ENCODE measurements at regions of chr13 and their contacts with region 1.

Region 1: GRCh38 chr13:30132623-30133553 is 174.5 kb downstream of the KATNAL1 start:
- DNase-seq: peak; percentile 89
- H3K4me3 ChIP-seq: no peak overlapping the region
- H3K27ac ChIP-seq: no peak overlapping the region
- H3K4me1 ChIP-seq: peaks cover 4% of the 10 kb centered on the region
- H3K27me3 ChIP-seq: no peaks in the 10 kb centered on the region
- CTCF ChIP-seq: peak; percentile 79 to 92
- POLR2A ChIP-seq: no peak

Region 2: GRCh38 chr13:30047154-30047874 is 85.6 kb before region 1 on chr13:
- CTCF ChIA-PET with region 1: no interaction called
- POLR2A ChIA-PET with region 1: no interaction called
- dilution Hi-C with region 1: no loop called
- intact Hi-C with region 1: no loop called
- DNase-seq: no peak
- H3K4me3 ChIP-seq: no peak overlapping the region
- H3K27ac ChIP-seq: no peak overlapping the region
- H3K4me1 ChIP-seq: no peaks in the 10 kb centered on the region
- H3K27me3 ChIP-seq: no peaks in the 10 kb centered on the region
- CTCF ChIP-seq: no peak
- POLR2A ChIP-seq: no peak

Region 3: GRCh38 chr13:30158774-30159445 is 26.0 kb after region 1 on chr13:
- CTCF ChIA-PET with region 1: interaction called, 60 read pairs
- POLR2A ChIA-PET with region 1: no interaction called
- dilution Hi-C with region 1: no loop called
- intact Hi-C with region 1: loop called (anchors 1 kb)
- DNase-seq: no peak
- H3K4me3 ChIP-seq: no peak overlapping the region
- H3K27ac ChIP-seq: no peak overlapping the region
- H3K4me1 ChIP-seq: no peaks in the 10 kb centered on the region
- H3K27me3 ChIP-seq: peaks cover 4 to 8% of the 10 kb centered on the region in 2 experiments
- CTCF ChIP-seq: peak in 1 of 2 donors; percentile 21
- POLR2A ChIP-seq: no peak

Region 4: DNA sequence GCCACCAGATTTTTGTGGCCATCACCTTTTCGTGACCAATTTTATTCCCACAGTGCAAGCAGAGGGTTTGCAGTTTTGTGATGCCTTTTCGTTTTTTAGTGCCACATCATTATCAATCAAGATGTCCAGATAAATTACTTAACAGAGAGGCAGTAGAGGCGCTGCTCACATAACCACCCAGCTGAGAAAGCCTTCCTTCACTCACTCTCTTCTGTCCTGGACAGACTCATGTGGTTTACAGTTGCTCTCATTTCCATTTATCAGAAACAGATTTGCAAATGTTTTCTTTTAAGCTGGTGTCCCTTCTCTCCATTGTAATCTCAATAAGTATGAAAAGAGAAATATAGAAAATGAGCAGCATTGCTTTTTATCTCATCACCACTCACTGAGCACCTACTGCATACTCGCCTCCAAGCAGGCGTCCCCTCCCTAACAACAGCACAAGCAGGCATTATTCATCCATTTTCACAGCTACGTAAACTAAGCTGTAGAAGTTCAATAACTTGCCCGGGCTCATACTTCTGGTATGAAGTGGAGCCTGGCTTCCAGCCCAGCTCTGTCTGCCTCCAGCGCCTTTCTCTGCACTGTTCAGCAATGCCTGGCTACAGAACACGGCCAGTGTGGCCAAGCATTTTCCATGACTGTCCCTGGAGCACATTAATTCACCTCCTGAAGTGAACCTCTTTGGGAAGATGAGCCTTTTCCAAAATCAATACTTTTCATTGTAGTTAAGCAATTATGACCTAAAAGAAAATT is 209.1 kb after region 1 on chr13:
- CTCF ChIA-PET with region 1: interaction called, 24 read pairs
- POLR2A ChIA-PET with region 1: no interaction called
- dilution Hi-C with region 1: loop called (anchors 25 kb)
- intact Hi-C with region 1: no loop called
- DNase-seq: peak; percentile 71
- H3K4me3 ChIP-seq: no peak overlapping the region
- H3K27ac ChIP-seq: no peak overlapping the region
- H3K4me1 ChIP-seq: no peaks in the 10 kb centered on the region
- H3K27me3 ChIP-seq: no peaks in the 10 kb centered on the region
- CTCF ChIP-seq: no peak
- POLR2A ChIP-seq: no peak

Region 5: DNA sequence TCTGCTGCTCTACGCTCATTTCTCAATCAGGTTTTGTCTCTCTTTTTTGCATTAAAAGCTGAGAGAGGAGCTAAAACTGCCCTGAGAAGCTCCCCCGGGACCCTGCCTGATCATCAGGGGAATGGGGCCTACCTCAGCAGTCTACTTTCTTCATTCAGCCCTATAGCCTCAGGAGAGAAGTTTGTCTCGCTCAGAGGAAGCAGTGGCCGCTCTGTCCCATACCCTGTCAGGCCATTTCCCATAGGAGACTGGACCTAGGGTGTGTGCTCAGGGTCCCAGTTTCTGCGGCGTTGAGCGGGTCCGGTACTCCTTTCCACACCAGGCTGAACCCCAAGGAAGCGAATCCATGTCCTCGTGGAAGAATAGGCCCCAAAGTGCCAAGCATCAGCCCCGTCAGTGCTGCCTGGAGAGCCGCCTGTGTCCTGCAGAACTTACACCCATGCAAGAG is 311.1 kb after region 1 on chr13:
- CTCF ChIA-PET with region 1: interaction called, 10 read pairs
- POLR2A ChIA-PET with region 1: no interaction called
- dilution Hi-C with region 1: no loop called
- intact Hi-C with region 1: loop called (anchors 5 kb)
- DNase-seq: no peak
- H3K4me3 ChIP-seq: no peak overlapping the region
- H3K27ac ChIP-seq: no peak overlapping the region
- H3K4me1 ChIP-seq: peaks cover 9% of the 10 kb centered on the region
- H3K27me3 ChIP-seq: no peaks in the 10 kb centered on the region
- CTCF ChIP-seq: no peak
- POLR2A ChIP-seq: no peak

Region 6: DNA sequence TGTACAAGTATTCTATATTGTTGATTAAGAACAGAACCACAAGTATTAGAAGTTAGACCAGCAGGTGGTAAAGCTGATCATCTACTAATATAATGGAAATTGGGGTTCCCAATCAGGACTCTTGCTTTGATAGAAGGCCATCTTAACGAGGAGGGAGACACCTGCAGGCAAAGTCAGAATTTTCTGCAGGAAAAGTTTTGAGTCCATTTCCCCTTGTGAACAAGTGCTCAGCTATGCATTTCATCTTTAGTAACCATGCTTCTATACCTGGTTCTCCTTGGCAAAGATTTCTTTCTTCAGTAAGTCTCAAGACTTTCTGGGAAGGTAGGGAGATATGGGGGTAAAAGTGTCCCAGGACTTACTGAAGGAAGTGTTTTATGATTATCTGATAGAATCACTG is 448.7 kb after region 1 on chr13:
- CTCF ChIA-PET with region 1: interaction called, 38 read pairs
- POLR2A ChIA-PET with region 1: no interaction called
- dilution Hi-C with region 1: no loop called
- intact Hi-C with region 1: no loop called
- DNase-seq: peak; percentile 32
- H3K4me3 ChIP-seq: no peak overlapping the region
- H3K27ac ChIP-seq: no peak overlapping the region
- H3K4me1 ChIP-seq: no peaks in the 10 kb centered on the region
- H3K27me3 ChIP-seq: no peaks in the 10 kb centered on the region
- CTCF ChIP-seq: peak in 1 of 2 donors; percentile 23
- POLR2A ChIP-seq: no peak

Region 7: DNA sequence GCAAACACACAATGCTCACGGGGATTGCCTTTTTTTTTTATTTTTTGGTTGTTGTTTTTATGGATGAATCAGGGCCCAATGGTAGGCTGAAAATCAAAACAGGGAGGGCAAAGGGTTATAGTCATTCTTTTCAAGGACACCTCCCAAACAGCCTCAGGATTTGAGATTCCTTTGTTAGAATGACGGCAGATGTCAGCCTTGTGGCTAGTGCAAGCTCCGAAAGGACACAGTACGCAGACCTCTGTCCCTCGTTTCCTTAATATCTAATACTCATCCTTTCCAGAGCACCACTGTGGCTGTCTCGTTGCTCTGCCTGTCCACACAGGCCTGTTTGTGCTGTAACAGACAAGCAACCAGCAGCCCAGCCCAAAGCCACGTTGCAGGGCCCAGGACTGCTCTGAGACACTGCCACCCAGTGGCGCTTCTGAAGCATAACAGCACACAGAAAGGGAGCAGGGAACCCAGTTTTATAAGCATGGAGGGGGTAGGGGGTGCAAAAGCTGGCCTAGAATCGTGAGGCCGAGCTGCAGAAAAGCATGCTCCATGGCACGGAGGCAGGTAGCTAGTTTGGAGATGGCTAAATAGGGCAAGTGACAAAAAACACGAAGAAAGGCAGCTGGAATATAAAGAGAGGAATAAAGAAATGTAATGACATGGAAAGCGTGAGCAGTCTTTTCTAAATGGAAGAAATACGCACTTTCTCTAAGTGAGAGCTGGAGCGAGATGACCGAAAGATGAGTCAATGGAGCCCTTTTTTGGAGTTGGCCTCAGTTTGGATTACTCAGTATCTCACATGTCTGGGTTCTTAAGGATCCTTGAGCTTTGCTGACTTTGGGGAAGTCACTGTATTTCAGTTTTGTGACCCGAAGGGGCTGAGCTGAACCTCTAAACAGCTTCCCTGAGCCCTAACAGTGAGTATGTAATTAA is 732.5 kb after region 1 on chr13:
- CTCF ChIA-PET with region 1: interaction called, 14 read pairs
- POLR2A ChIA-PET with region 1: no interaction called
- dilution Hi-C with region 1: no loop called
- intact Hi-C with region 1: loop called (anchors 1 kb)
- DNase-seq: peak; percentile 92
- H3K4me3 ChIP-seq: no peak overlapping the region
- H3K27ac ChIP-seq: peak overlapping the region; percentile 95
- H3K4me1 ChIP-seq: peaks cover 29% of the 10 kb centered on the region
- H3K27me3 ChIP-seq: no peaks in the 10 kb centered on the region
- CTCF ChIP-seq: peak; percentile 91 to 96
- POLR2A ChIP-seq: no peak

Measured in endothelial cell of umbilical vein (primary cell).